ENCODE measurements at regions of chr3 and their contacts with region 1.

Region 1: GRCh38 chr3:190265796-190266195 is 56.5 kb downstream of the CLDN1 start:
- DNase-seq: peak; percentile 97
- H3K4me3 Mint-ChIP-seq: no peak overlapping the region
- H3K27ac Mint-ChIP-seq: peak overlapping the region; percentile 82
- H3K4me1 Mint-ChIP-seq: peaks cover 24% of the 10 kb centered on the region
- H3K27me3 Mint-ChIP-seq: no peaks in the 10 kb centered on the region
- CTCF ChIP-seq: no peak

Region 2: GRCh38 chr3:190076601-190077396 is 189.0 kb before region 1 on chr3:
- CTCF ChIA-PET with region 1: no interaction called
- POLR2A ChIA-PET with region 1: no interaction called
- intact Hi-C with region 1: no loop called
- DNase-seq: peak; percentile 73
- H3K4me3 Mint-ChIP-seq: no peak overlapping the region
- H3K27ac Mint-ChIP-seq: peak overlapping the region; percentile 92
- H3K4me1 Mint-ChIP-seq: peaks cover 28% of the 10 kb centered on the region
- H3K27me3 Mint-ChIP-seq: no peaks in the 10 kb centered on the region
- CTCF ChIP-seq: no peak

Region 3: GRCh38 chr3:190155752-190156151 is 110.0 kb before region 1 on chr3:
- CTCF ChIA-PET with region 1: no interaction called
- POLR2A ChIA-PET with region 1: no interaction called
- intact Hi-C with region 1: no loop called
- DNase-seq: peak; percentile 79
- H3K4me3 Mint-ChIP-seq: peak overlapping the region; percentile 10
- H3K27ac Mint-ChIP-seq: peak overlapping the region; percentile 89
- H3K4me1 Mint-ChIP-seq: peaks cover 18% of the 10 kb centered on the region
- H3K27me3 Mint-ChIP-seq: no peaks in the 10 kb centered on the region
- CTCF ChIP-seq: no peak

Region 4: GRCh38 chr3:190252080-190252479 is 13.7 kb before region 1 on chr3:
- CTCF ChIA-PET with region 1: interaction called, 3 read pairs
- POLR2A ChIA-PET with region 1: interaction called, 10 read pairs
- intact Hi-C with region 1: no loop called
- DNase-seq: peak; percentile 81
- H3K4me3 Mint-ChIP-seq: no peak overlapping the region
- H3K27ac Mint-ChIP-seq: no peak overlapping the region
- H3K4me1 Mint-ChIP-seq: peaks cover 9% of the 10 kb centered on the region
- H3K27me3 Mint-ChIP-seq: no peaks in the 10 kb centered on the region
- CTCF ChIP-seq: no peak

Region 5: DNA sequence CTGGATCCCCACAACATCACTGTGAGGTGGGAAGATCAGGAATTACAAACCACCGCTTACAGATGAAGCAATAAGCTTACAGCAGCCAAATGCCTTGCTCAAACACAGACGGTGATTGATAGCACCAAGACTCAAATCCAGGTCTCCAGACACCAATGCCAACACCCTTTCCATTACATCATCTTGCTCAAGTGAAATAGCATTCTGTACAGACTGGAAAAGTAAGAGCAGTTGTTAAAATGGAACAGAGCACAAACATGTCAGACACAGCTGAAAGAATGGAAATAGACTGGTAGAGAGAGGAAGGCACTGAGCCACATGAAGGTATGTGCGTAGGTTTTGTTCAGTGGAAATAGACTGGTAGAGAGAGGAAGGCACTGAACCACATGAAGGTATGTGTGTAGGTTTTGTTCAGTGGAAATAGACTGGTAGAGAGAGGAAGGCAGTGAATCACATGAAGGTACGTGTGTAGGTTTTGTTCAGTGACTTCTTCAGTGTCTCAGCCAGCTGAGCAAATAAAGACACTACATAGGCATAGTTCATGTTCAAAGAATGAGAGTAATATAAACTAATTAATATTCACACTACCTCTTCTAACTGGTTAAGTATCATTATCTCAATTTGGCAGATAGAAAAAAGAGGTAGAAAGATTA is 40.8 kb after region 1 on chr3:
- CTCF ChIA-PET with region 1: interaction called, 5 read pairs
- POLR2A ChIA-PET with region 1: interaction called, 91 read pairs
- intact Hi-C with region 1: loop called (anchors 5 kb)
- DNase-seq: peak; percentile 94
- H3K4me3 Mint-ChIP-seq: peak overlapping the region; percentile 0
- H3K27ac Mint-ChIP-seq: peak overlapping the region; percentile 29
- H3K4me1 Mint-ChIP-seq: peaks cover 29% of the 10 kb centered on the region
- H3K27me3 Mint-ChIP-seq: no peaks in the 10 kb centered on the region
- CTCF ChIP-seq: no peak

Region 6: GRCh38 chr3:190345027-190345821 is 79.4 kb after region 1 on chr3:
- CTCF ChIA-PET with region 1: no interaction called
- POLR2A ChIA-PET with region 1: interaction called, 15 read pairs
- intact Hi-C with region 1: no loop called
- DNase-seq: peak; percentile 94
- H3K4me3 Mint-ChIP-seq: peak overlapping the region; percentile 58
- H3K27ac Mint-ChIP-seq: peak overlapping the region; percentile 99
- H3K4me1 Mint-ChIP-seq: peaks cover 40% of the 10 kb centered on the region
- H3K27me3 Mint-ChIP-seq: no peaks in the 10 kb centered on the region
- CTCF ChIP-seq: no peak

Measured in MCF 10A (cell line).